CD8-positive, alpha-beta T cell (primary cell): ENCODE measurements at regions of chr10 and their contacts with region 1.

Region 1: DNA sequence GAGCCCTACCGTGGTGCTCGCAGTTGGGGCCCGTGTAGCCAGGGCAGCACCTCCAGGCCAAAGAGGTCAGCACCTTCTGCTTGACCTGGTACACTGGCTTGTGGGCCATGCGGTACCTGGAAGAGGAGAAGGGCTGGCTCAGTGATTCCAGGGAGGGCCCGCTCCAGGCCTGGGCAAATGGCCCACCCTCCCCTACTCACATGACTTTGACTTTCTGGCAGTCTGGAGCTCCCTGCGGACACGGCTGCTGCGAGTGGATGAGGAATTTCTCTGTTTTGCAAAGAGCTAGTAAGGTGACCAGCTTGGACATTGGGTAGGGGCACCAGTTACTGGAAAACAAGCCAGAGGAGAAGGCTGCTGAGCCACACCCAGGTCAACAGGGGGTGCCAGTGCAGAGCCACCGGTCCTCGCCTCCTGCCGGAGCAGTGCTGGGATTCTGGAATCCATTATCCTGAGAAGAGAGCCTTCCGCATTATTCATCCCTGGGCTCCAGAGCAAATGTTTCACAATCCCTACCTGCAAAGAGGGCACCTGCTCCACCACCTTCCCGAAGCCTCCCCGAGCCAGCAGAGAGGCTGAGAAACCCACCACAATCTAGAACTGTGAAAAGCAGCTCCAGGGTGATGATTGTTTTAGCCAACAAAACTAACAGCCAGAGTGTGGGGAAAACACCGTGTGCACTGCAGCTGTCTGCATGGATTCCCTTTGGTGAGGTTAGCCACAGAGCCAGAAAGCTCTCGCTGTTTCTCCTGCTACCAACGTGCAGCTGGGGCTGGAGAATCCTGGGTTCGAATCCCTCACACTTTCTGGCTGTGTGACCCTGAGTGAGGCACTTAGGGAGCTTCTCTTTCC is 11.8 kb downstream of the MMRN2 start:
- DNase-seq: peak in 2 of 9 experiments; percentile 4 to 39
- ATAC-seq: no peak
- H3K4me3 ChIP-seq: no peak overlapping the region
- H3K4me3 Mint-ChIP-seq: no peak overlapping the region
- H3K27ac ChIP-seq: no peak overlapping the region
- H3K27ac Mint-ChIP-seq: no peak overlapping the region
- H3K4me1 ChIP-seq: peaks cover 3% of the 10 kb centered on the region
- H3K4me1 Mint-ChIP-seq: peaks cover 9% of the 10 kb centered on the region
- H3K27me3 ChIP-seq: no peaks in the 10 kb centered on the region
- H3K27me3 Mint-ChIP-seq: peaks cover 5% of the 10 kb centered on the region
- CTCF ChIP-seq: no peak

Region 2: DNA sequence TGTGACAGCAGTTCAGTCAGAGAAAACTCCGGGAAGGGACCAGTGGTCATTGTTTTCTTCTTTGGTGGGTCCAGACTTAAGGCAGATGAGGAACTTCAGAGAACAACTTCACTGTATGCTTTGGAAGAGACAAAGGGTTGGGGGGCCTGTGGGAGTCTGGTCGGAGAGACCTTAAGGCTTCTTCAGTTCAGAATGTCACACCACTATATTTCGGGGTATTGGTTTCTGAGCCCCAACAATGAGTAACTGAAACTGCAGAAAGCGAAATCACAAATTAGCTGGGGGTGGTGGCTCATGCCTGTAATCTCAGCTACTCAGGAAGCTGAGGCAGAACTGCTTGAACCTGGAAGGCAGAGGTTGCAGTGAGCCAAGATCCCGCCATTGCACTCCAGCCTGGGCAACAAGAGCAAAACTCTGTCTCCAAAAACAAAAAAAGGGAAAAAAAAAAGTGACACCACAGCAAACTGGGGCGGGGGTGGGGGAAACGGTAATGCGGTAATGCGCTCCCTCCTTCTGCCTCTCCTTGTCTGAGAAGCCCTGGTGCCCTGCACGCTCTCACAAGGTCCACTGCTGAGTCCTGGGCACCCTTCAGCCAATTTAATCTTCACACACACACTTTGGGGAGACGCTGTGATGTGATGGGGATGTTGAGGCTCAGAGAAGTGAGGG is 20.5 kb after region 1 on chr10:
- CTCF ChIA-PET with region 1: interaction called, 116 read pairs
- POLR2A ChIA-PET with region 1: interaction called, 3 read pairs
- intact Hi-C with region 1: loop called in 1 of 2 experiments (anchors 1 kb)
- DNase-seq: no peak
- ATAC-seq: no peak
- H3K4me3 ChIP-seq: peak overlapping the region; percentile 9 to 10
- H3K4me3 Mint-ChIP-seq: peak overlapping the region; percentile 64
- H3K27ac ChIP-seq: no peak overlapping the region
- H3K27ac Mint-ChIP-seq: peak overlapping the region; percentile 34
- H3K4me1 ChIP-seq: peaks cover 49% of the 10 kb centered on the region
- H3K4me1 Mint-ChIP-seq: peaks cover 33% of the 10 kb centered on the region
- H3K27me3 ChIP-seq: no peaks in the 10 kb centered on the region
- H3K27me3 Mint-ChIP-seq: no peaks in the 10 kb centered on the region
- CTCF ChIP-seq: no peak

Region 3: DNA sequence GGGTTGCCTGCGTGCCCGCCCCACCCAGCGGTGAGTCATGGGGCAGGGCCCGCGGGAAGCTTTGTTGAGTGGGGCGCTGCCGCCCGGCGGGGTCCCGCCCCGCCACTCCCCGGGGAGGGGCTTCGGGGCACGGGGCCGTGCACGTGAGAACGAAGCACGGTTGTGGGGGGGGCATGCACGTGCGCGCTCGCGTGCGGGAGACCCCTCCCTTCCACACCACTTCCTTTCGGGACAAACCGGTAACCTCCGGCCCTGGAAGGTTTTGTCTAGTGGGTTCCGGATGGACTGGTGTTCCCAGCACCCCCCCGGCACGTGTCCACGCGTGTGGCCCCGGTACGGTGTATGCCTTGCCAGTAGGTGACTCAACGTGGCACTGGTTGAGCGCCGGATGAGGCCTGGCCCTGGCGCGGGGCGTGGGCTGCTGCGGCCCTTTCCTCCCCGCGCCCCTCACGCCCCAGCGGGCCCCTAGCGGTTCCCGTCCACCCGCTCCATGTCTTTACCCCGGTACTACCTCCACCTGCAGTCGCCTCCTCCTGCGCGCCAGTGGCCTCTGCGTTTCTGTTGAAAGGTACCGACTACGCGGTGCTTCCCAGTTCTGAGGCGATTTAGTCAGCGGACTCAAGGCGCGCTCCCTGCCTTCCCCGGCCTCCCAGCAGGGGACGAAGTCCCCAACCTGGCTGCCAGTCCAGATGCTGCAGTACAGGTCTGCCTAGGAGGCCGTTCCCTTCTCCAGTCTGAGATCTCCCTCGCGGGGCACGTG is 25.8 kb after region 1 on chr10:
- CTCF ChIA-PET with region 1: interaction called, 116 read pairs
- POLR2A ChIA-PET with region 1: interaction called, 3 read pairs
- intact Hi-C with region 1: no loop called
- DNase-seq: peak; percentile 87 to 95 (median 91)
- ATAC-seq: peak; percentile 86
- H3K4me3 ChIP-seq: peak overlapping the region; percentile 61 to 66
- H3K4me3 Mint-ChIP-seq: peak overlapping the region; percentile 78
- H3K27ac ChIP-seq: peak overlapping the region; percentile 80 to 89
- H3K27ac Mint-ChIP-seq: peak overlapping the region; percentile 91
- H3K4me1 ChIP-seq: peaks cover 50% of the 10 kb centered on the region
- H3K4me1 Mint-ChIP-seq: peaks cover 31% of the 10 kb centered on the region
- H3K27me3 ChIP-seq: no peaks in the 10 kb centered on the region
- H3K27me3 Mint-ChIP-seq: no peaks in the 10 kb centered on the region
- CTCF ChIP-seq: no peak

Region 4: GRCh38 chr10:87504640-87505365 is 559.2 kb after region 1 on chr10 and contains the start of gene MINPP1:
- CTCF ChIA-PET with region 1: no interaction called
- POLR2A ChIA-PET with region 1: no interaction called
- intact Hi-C with region 1: loop called in 1 of 2 experiments (anchors 5 kb)
- DNase-seq: peak; percentile 23 to 83 (median 66)
- ATAC-seq: peak; percentile 70
- H3K4me3 ChIP-seq: peak within 1 kb of the TSS; percentile 94 to 96
- H3K4me3 Mint-ChIP-seq: peak within 1 kb of the TSS; percentile 86
- H3K27ac ChIP-seq: peak within 1 kb of the TSS; percentile 46 to 50
- H3K27ac Mint-ChIP-seq: peak within 1 kb of the TSS; percentile 79
- H3K4me1 ChIP-seq: peaks cover 18% of the 10 kb centered on the region
- H3K4me1 Mint-ChIP-seq: peaks cover 39% of the 10 kb centered on the region
- H3K27me3 ChIP-seq: no peaks in the 10 kb centered on the region
- H3K27me3 Mint-ChIP-seq: no peaks in the 10 kb centered on the region
- CTCF ChIP-seq: no peak
- total RNA-seq, gene MINPP1: 0.64 to 0.81 TPM